SK-N-SH (cell line): ENCODE measurements at regions of chr12 and their contacts with region 1.

Region 1: GRCh38 chr12:12916135-12916944 is 25.0 kb downstream of the GPRC5A start:
- DNase-seq: peak; percentile 80
- H3K4me3 ChIP-seq: peak overlapping the region in 1 of 2 experiments; percentile 25; a peak in 1 of 4 replicates
- H3K27ac ChIP-seq: no peak overlapping the region
- H3K4me1 ChIP-seq: no peaks in the 10 kb centered on the region
- H3K27me3 ChIP-seq: no peaks in the 10 kb centered on the region
- CTCF ChIP-seq: peak; percentile 97
- EP300 ChIP-seq: no peak
- RAD21 ChIP-seq: peak; percentile 99

Region 2: DNA sequence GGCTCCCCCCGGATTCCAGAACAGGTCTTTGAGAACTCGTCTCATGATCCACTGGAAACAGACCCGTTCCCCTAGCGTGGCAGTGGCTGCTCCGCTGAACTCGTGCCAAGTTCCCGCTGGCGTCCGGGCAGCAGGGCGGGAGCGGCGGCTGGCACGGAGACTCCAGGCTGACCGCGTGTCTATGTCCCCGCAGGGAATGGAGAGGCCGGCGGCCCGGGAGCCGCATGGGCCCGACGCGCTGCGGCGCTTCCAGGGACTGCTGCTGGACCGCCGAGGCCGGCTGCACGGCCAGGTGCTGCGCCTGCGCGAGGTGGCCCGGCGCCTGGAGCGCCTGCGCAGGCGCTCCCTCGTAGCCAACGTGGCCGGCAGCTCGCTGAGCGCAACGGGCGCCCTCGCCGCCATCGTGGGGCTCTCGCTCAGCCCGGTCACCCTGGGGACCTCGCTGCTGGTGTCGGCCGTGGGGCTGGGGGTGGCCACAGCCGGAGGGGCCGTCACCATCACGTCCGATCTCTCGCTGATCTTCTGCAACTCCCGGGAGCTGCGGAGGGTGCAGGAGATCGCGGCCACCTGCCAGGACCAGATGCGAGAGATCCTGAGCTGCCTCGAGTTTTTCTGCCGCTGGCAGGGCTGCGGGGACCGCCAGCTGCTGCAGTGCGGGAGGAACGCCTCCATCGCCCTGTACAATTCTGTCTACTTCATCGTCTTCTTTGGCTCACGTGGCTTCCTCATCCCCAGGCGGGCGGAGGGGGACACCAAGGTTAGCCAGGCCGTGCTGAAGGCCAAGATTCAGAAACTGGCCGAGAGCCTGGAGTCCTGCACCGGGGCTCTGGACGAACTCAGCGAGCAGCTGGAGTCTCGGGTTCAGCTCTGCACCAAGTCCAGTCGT is 129.4 kb before region 1 on chr12:
- CTCF ChIA-PET with region 1: interaction called, 16 read pairs
- POLR2A ChIA-PET with region 1: no interaction called
- DNase-seq: peak; percentile 97
- H3K4me3 ChIP-seq: peak overlapping the region; percentile 51 to 54
- H3K27ac ChIP-seq: peak overlapping the region; percentile 49 to 92; a peak in 3 of 4 replicates
- H3K4me1 ChIP-seq: peaks cover 5 to 30% of the 10 kb centered on the region in 2 experiments; a peak in 3 of 4 replicates
- H3K27me3 ChIP-seq: no peaks in the 10 kb centered on the region
- CTCF ChIP-seq: 0 out of 2 replicates have a peak, but pooled peaks have one; percentile 5
- EP300 ChIP-seq: peak in 1 of 2 experiments; percentile 22; a peak in 1 of 4 replicates
- RAD21 ChIP-seq: no peak

Region 3: GRCh38 chr12:12927211-12928079 is 11.1 kb after region 1 on chr12:
- CTCF ChIA-PET with region 1: interaction called, 15 read pairs
- POLR2A ChIA-PET with region 1: no interaction called
- DNase-seq: peak; percentile 66
- H3K4me3 ChIP-seq: peak overlapping the region; percentile 44 to 56
- H3K27ac ChIP-seq: peak overlapping the region in 1 of 2 experiments; percentile 33; a peak in 1 of 4 replicates
- H3K4me1 ChIP-seq: peaks cover 0 to 4% of the 10 kb centered on the region in 2 experiments; a peak in 1 of 4 replicates
- H3K27me3 ChIP-seq: no peaks in the 10 kb centered on the region
- CTCF ChIP-seq: no peak
- EP300 ChIP-seq: no peak
- RAD21 ChIP-seq: no peak

Region 4: GRCh38 chr12:12964255-12964654 is 47.9 kb after region 1 on chr12:
- CTCF ChIA-PET with region 1: interaction called, 10 read pairs
- POLR2A ChIA-PET with region 1: no interaction called
- DNase-seq: no peak
- H3K4me3 ChIP-seq: no peak overlapping the region
- H3K27ac ChIP-seq: no peak overlapping the region
- H3K4me1 ChIP-seq: no peaks in the 10 kb centered on the region
- H3K27me3 ChIP-seq: no peaks in the 10 kb centered on the region
- CTCF ChIP-seq: no peak
- EP300 ChIP-seq: no peak
- RAD21 ChIP-seq: no peak

Region 5: GRCh38 chr12:12983420-12984035 is 67.2 kb after region 1 on chr12:
- CTCF ChIA-PET with region 1: interaction called, 38 read pairs
- POLR2A ChIA-PET with region 1: no interaction called
- DNase-seq: peak; percentile 45
- H3K4me3 ChIP-seq: no peak overlapping the region; a peak in 1 of 4 replicates
- H3K27ac ChIP-seq: no peak overlapping the region
- H3K4me1 ChIP-seq: peaks cover 2 to 12% of the 10 kb centered on the region in 2 experiments; a peak in 2 of 4 replicates
- H3K27me3 ChIP-seq: no peaks in the 10 kb centered on the region
- CTCF ChIP-seq: peak; percentile 78
- EP300 ChIP-seq: no peak
- RAD21 ChIP-seq: peak; percentile 78

Region 6: GRCh38 chr12:13223179-13223859 is 307.0 kb after region 1 on chr12:
- CTCF ChIA-PET with region 1: interaction called, 24 read pairs
- POLR2A ChIA-PET with region 1: no interaction called
- DNase-seq: no peak
- H3K4me3 ChIP-seq: no peak overlapping the region
- H3K27ac ChIP-seq: no peak overlapping the region
- H3K4me1 ChIP-seq: no peaks in the 10 kb centered on the region
- H3K27me3 ChIP-seq: no peaks in the 10 kb centered on the region
- CTCF ChIP-seq: no peak
- EP300 ChIP-seq: no peak
- RAD21 ChIP-seq: no peak

Region 7: GRCh38 chr12:13233830-13234641 is 317.7 kb after region 1 on chr12:
- CTCF ChIA-PET with region 1: interaction called, 14 read pairs
- POLR2A ChIA-PET with region 1: no interaction called
- DNase-seq: peak; percentile 46
- H3K4me3 ChIP-seq: no peak overlapping the region
- H3K27ac ChIP-seq: no peak overlapping the region
- H3K4me1 ChIP-seq: no peaks in the 10 kb centered on the region
- H3K27me3 ChIP-seq: no peaks in the 10 kb centered on the region
- CTCF ChIP-seq: peak; percentile 85
- EP300 ChIP-seq: no peak
- RAD21 ChIP-seq: peak; percentile 74